ENCODE measurements at regions of chr19 and their contacts with region 1.

Region 1: GRCh38 chr19:41255171-41255570 is 9.0 kb upstream of the HNRNPUL1 start:
- DNase-seq: no peak
- H3K4me3 ChIP-seq: no peak overlapping the region
- H3K27ac ChIP-seq: no peak overlapping the region
- H3K4me1 ChIP-seq: no peaks in the 10 kb centered on the region
- H3K27me3 ChIP-seq: no peaks in the 10 kb centered on the region
- CTCF ChIP-seq: no peak
- EP300 ChIP-seq: no peak
- POLR2A ChIP-seq: no peak

Region 2: DNA sequence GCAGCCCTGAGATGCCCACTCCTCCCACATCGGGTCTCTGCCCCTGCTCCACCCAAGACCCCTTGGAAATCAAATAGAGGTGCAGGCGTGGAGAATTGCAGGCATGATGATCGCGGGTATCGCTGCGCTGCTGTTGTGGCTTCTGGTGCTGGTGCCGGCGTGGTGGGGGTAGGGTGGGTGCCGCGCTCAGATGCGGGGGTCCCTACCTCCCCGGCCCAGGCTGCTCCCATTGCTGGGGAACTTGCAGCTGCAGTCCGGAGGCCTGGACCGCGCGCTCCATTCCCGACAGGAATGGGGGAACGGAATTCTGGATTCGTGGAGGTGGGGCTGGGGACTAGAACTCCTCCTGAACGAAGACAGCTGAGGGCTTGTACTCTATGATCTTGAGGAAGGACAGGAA is 120.6 kb before region 1 on chr19:
- in situ Hi-C with region 1: no loop called
- intact Hi-C with region 1: no loop called
- DNase-seq: no peak
- H3K4me3 ChIP-seq: no peak overlapping the region
- H3K27ac ChIP-seq: no peak overlapping the region
- H3K4me1 ChIP-seq: peaks cover 0 to 12% (median 3%) of the 10 kb centered on the region in 4 donors
- H3K27me3 ChIP-seq: no peaks in the 10 kb centered on the region
- CTCF ChIP-seq: no peak
- EP300 ChIP-seq: no peak
- POLR2A ChIP-seq: no peak

Region 3: DNA sequence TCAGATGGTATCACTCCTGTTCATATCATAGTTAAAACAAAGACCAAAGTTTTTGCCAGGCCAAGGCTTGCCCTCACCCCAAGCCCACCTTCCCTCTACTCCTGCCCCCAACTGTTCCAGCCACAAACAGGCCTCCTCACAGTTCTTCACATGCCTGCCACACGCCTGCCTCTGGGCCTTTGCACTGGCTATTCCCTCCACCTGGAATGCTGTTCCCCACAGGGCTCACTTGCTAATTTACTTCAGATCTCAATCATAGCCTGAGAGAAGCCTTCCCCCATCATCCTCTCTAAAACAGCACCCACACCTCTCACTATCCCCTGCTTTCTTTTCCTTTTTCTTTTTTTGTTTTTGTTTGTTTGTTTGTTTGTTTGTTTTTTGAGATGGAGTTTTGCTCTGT is 41.0 kb before region 1 on chr19:
- in situ Hi-C with region 1: loop called in 3 of 4 experiments (anchors 5 to 10 kb)
- intact Hi-C with region 1: no loop called
- DNase-seq: no peak
- H3K4me3 ChIP-seq: no peak overlapping the region
- H3K27ac ChIP-seq: no peak overlapping the region
- H3K4me1 ChIP-seq: peaks cover 0 to 8% (median 4%) of the 10 kb centered on the region in 4 donors
- H3K27me3 ChIP-seq: peaks cover 5% of the 10 kb centered on the region
- CTCF ChIP-seq: no peak
- EP300 ChIP-seq: no peak
- POLR2A ChIP-seq: no peak

Measured in transverse colon (tissue), 4 donors.